Activated naive CD4-positive, alpha-beta T cell treated with anti-CD3 and anti-CD28 coated beads for 36 hours (primary cell): ENCODE measurements at regions of chr4 and their contacts with region 1.

Region 1: DNA sequence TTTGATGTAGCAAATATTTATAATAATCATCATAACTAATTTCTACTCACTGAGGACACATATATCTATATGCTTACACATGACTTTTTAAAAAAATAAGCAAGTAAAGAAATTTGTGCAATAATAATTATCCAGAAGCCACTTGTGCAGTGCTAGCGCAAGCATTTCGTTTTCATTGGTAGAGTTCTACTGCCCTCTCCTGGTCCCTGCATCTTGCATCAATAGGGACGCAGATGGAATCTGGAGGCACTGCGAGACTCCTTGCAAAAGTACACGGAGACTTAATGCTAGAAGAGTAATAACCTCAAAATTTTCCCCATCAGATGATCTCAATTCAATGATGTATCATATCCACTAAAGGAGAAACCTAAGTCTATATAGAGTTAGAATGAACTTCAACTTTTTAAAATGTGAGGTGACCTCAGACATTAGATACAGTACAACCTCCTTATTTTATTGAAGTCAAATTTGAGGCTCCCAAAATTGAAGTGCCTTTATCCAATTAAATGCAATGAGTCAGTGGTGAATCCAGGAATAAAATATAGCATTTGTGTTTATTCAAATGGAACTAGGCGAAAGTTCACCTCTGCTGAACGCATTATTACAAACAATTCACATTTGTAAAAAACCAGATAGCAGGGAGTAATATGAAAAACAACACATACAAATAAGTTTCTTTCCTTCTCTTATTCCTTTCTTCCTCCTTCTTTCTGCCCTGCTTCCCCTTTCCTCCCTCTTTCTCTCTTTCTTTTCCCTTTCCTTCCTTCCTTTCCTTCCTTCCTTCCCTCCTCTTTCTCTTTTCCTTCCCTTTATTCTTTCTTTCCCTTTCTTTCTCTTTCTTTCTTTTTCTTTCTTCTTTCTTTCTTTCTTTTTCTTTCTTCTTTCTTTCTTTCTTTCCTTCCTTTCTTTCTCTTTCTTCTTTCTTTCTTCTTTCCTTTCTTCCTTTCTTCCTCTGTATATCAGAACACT is 450.0 kb downstream of the ANKRD50 start:
- DNase-seq: peak; percentile 71
- H3K4me3 Mint-ChIP-seq: no peak overlapping the region
- H3K27ac Mint-ChIP-seq: no peak overlapping the region
- H3K4me1 Mint-ChIP-seq: no peaks in the 10 kb centered on the region
- H3K27me3 Mint-ChIP-seq: peaks cover 4% of the 10 kb centered on the region

Region 2: GRCh38 chr4:122758033-122758432 is 1504.5 kb before region 1 on chr4:
- CTCF ChIA-PET with region 1: no interaction called
- intact Hi-C with region 1: loop called (anchors 5 kb)
- DNase-seq: no peak
- H3K4me3 Mint-ChIP-seq: no peak overlapping the region
- H3K27ac Mint-ChIP-seq: no peak overlapping the region
- H3K4me1 Mint-ChIP-seq: peaks cover 18% of the 10 kb centered on the region
- H3K27me3 Mint-ChIP-seq: peaks cover 10% of the 10 kb centered on the region

Region 3: GRCh38 chr4:123102897-123103471 is 1159.5 kb before region 1 on chr4:
- CTCF ChIA-PET with region 1: no interaction called
- intact Hi-C with region 1: loop called (anchors 2 kb)
- DNase-seq: no peak
- H3K4me3 Mint-ChIP-seq: no peak overlapping the region
- H3K27ac Mint-ChIP-seq: no peak overlapping the region
- H3K4me1 Mint-ChIP-seq: no peaks in the 10 kb centered on the region
- H3K27me3 Mint-ChIP-seq: no peaks in the 10 kb centered on the region

Region 4: DNA sequence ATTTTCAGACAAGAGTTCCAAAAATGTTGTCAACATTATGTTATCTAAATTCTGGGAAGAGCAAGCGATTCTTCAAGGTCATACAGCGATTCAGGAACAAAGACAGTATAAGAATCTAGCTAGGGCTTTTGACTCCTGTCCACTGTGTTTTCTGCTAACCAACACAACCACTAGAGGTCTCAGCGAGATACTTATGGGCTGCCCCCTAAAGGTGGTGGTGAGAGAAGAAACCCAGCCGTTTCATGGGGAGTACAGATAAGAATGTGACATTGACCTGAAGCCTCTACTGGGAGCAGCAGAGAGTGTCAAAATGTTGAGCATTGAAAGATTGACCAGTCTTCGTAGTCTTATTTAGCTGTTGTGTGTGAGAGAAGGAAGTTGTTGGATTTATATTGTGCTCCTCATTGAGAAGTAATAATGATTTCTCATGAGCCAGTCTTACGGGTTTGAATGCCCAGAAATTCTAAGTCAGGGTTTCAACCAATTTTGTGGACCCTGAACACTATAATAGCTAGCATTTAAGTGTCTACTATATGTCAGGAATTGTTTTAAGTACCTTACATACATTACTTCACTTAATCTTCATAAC is 697.6 kb before region 1 on chr4:
- CTCF ChIA-PET with region 1: no interaction called
- intact Hi-C with region 1: loop called (anchors 2 kb)
- DNase-seq: peak; percentile 65
- H3K4me3 Mint-ChIP-seq: no peak overlapping the region
- H3K27ac Mint-ChIP-seq: no peak overlapping the region
- H3K4me1 Mint-ChIP-seq: no peaks in the 10 kb centered on the region
- H3K27me3 Mint-ChIP-seq: no peaks in the 10 kb centered on the region

Region 5: DNA sequence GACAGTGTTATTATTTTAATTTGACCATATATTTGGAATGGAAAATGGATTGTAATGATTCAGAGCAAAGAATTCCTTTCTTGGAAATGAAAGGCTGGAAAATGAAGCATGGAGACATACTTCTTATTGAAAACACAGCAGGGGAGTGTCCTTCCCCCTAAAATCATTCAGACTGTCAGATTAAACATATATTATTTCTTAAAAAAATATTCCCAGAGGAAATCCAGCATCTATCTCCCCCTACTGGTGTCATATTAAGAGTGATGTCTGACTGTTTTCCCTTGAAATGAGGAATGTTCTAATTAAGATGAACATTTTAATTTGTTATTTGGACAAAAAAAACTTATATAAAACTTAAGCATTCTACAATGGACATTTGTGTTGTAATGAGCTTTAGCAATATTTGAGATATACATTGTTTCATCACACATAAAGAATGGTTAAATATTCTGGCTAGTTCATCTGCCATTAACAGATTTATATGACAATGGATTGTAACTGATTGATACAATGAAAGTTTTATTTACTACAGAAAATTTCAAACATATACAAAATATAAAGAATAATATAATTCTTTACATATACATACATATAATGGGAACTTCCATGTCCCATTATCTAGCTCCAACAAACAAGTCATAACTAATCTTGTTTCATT is 601.3 kb before region 1 on chr4:
- CTCF ChIA-PET with region 1: no interaction called
- intact Hi-C with region 1: loop called (anchors 10 kb)
- DNase-seq: no peak
- H3K4me3 Mint-ChIP-seq: no peak overlapping the region
- H3K27ac Mint-ChIP-seq: no peak overlapping the region
- H3K4me1 Mint-ChIP-seq: peaks cover 11% of the 10 kb centered on the region
- H3K27me3 Mint-ChIP-seq: peaks cover 20% of the 10 kb centered on the region

Region 6: GRCh38 chr4:123776254-123776653 is 486.2 kb before region 1 on chr4:
- CTCF ChIA-PET with region 1: interaction called, 3 read pairs
- intact Hi-C with region 1: loop called (anchors 2 kb)
- DNase-seq: no peak
- H3K4me3 Mint-ChIP-seq: no peak overlapping the region
- H3K27ac Mint-ChIP-seq: no peak overlapping the region
- H3K4me1 Mint-ChIP-seq: peaks cover 6% of the 10 kb centered on the region
- H3K27me3 Mint-ChIP-seq: peaks cover 7% of the 10 kb centered on the region

Region 7: GRCh38 chr4:125283707-125284279 is 1021.3 kb after region 1 on chr4:
- CTCF ChIA-PET with region 1: no interaction called
- intact Hi-C with region 1: loop called (anchors 5 kb)
- DNase-seq: peak; percentile 5
- H3K4me3 Mint-ChIP-seq: no peak overlapping the region
- H3K27ac Mint-ChIP-seq: no peak overlapping the region
- H3K4me1 Mint-ChIP-seq: no peaks in the 10 kb centered on the region
- H3K27me3 Mint-ChIP-seq: peaks cover 1% of the 10 kb centered on the region

Region 8: GRCh38 chr4:125505621-125506020 is 1243.1 kb after region 1 on chr4:
- CTCF ChIA-PET with region 1: no interaction called
- intact Hi-C with region 1: no loop called
- DNase-seq: no peak
- H3K4me3 Mint-ChIP-seq: no peak overlapping the region
- H3K27ac Mint-ChIP-seq: no peak overlapping the region
- H3K4me1 Mint-ChIP-seq: no peaks in the 10 kb centered on the region
- H3K27me3 Mint-ChIP-seq: no peaks in the 10 kb centered on the region